Aorta (tissue), 5 donors: ENCODE measurements at regions of chr4 and their contacts with region 1.

Region 1: GRCh38 chr4:73411731-73412414 is 7.8 kb downstream of the ALB start:
- DNase-seq: no peak
- ATAC-seq: no peak
- H3K4me3 ChIP-seq: no peak overlapping the region
- H3K27ac ChIP-seq: no peak overlapping the region
- H3K4me1 ChIP-seq: no peaks in the 10 kb centered on the region
- H3K27me3 ChIP-seq: no peaks in the 10 kb centered on the region

Region 2: DNA sequence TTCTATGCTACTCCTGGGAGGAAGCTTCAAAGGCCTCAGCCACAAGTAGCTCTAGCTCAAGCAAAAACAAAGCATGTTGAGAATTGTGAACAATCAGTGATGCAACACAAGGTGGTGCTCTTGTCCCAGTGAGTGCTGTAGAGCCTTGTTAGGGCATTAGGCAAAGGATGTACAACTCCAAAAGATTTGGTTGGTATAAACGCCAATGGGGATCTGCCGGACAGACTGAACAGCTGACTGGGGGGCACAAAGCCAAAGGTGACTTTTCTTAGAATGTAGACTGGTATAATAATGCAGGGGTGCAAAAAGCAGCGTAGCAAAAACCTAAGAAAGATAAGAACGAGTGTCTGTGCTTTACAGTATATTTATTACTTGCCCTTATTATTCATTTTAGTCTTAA is 70.4 kb before region 1 on chr4:
- intact Hi-C with region 1: loop called in 1 of 2 experiments (anchors 2 kb)
- DNase-seq: no peak
- ATAC-seq: peak; percentile 44
- H3K4me3 ChIP-seq: no peak overlapping the region
- H3K27ac ChIP-seq: no peak overlapping the region
- H3K4me1 ChIP-seq: no peaks in the 10 kb centered on the region
- H3K27me3 ChIP-seq: no peaks in the 10 kb centered on the region

Region 3: DNA sequence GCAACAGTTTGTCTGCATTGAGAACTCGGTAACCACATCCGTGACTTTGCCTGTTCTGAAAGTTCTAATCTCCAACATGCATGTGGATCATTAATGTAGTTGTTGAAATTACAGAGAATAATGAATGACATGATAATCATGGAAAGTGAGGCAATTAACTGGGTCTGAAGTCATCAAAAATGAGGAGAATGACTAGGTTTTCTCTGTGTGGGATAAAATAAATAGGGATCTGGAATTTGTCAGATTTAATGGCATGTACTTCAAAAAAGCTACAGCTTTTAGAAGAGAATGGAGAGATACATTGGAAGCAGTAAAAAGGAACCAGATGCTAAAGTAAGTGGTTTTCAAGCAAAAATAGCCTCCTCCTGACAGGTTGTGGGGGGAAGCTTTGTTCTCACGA is 129.0 kb after region 1 on chr4:
- intact Hi-C with region 1: no loop called
- DNase-seq: no peak
- ATAC-seq: no peak
- H3K4me3 ChIP-seq: no peak overlapping the region
- H3K27ac ChIP-seq: no peak overlapping the region
- H3K4me1 ChIP-seq: no peaks in the 10 kb centered on the region
- H3K27me3 ChIP-seq: no peaks in the 10 kb centered on the region